ENCODE measurements at regions of chr2 and their contacts with region 1.

Region 1: DNA sequence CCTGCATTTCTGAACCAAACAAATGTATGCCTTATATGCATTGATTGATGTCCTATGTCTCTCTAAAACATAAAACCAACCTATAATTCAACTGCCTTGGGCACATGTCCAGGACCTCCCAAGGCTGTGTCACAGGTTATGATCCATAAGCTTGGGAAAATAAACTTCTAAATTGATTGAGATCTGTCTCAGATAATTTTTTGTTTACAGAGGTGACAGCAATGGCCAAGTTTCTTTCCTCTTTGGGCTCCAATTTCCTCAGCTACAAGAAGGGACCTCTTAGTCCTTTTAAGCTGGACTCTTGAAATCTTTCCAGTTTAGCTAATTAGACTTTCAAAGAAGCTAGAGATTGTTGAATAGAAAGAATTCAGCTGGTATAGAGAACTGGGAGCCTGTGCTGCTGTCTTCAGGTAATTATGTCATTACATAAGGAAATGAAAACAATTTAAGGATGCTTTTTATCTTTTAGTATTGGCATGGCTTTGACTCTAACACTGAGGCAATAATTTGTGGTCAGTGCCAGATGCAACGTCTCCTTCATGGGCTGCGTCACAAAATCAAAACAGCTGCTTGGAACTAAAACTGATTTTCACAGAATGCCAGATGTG is 412.1 kb upstream of the TRIB2 start:
- DNase-seq: no peak
- ATAC-seq: no peak
- H3K4me3 Mint-ChIP-seq: no peak overlapping the region
- H3K27ac Mint-ChIP-seq: no peak overlapping the region
- H3K4me1 Mint-ChIP-seq: peaks cover 39% of the 10 kb centered on the region
- H3K27me3 Mint-ChIP-seq: no peaks in the 10 kb centered on the region
- CTCF ChIP-seq: no peak

Region 2: DNA sequence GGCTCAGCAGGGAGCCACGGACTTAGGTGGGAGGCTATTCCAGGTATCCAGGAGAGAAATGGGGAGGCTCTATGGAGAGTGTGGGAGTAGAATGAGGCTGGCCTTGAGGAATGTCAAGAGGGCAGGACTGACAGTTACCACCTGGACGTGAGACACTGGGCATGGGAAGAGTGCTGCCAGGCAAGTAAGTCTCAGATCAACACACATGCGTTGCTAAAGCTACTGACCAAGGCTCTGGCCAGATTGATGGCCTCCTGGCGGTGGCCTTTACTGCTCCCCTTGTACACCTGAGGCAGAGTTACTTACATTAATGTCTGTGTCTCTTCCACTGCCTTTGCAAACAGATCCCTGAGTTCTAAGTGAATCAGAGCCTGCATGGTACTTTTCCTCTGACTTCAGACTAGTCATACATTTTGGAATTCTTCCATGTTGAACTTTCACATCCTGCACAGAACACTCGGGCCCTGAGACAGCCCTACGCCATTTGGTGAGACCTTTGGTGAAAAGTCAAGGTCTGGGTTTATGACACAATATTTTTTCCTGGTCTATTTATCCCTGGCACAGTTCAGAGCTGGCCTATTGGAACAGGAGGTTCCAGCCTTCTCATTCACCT is 13.3 kb after region 1 on chr2:
- CTCF ChIA-PET with region 1: interaction called, 10 read pairs
- POLR2A ChIA-PET with region 1: no interaction called
- intact Hi-C with region 1: no loop called
- DNase-seq: no peak
- ATAC-seq: no peak
- H3K4me3 Mint-ChIP-seq: no peak overlapping the region
- H3K27ac Mint-ChIP-seq: no peak overlapping the region
- H3K4me1 Mint-ChIP-seq: peaks cover 13% of the 10 kb centered on the region
- H3K27me3 Mint-ChIP-seq: no peaks in the 10 kb centered on the region
- CTCF ChIP-seq: no peak

Measured in activated CD8-positive, alpha-beta T cell treated with anti-CD3 and anti-CD28 coated beads for 36 hours (primary cell).